ENCODE measurements at regions of chr12 and their contacts with region 1.

Region 1: DNA sequence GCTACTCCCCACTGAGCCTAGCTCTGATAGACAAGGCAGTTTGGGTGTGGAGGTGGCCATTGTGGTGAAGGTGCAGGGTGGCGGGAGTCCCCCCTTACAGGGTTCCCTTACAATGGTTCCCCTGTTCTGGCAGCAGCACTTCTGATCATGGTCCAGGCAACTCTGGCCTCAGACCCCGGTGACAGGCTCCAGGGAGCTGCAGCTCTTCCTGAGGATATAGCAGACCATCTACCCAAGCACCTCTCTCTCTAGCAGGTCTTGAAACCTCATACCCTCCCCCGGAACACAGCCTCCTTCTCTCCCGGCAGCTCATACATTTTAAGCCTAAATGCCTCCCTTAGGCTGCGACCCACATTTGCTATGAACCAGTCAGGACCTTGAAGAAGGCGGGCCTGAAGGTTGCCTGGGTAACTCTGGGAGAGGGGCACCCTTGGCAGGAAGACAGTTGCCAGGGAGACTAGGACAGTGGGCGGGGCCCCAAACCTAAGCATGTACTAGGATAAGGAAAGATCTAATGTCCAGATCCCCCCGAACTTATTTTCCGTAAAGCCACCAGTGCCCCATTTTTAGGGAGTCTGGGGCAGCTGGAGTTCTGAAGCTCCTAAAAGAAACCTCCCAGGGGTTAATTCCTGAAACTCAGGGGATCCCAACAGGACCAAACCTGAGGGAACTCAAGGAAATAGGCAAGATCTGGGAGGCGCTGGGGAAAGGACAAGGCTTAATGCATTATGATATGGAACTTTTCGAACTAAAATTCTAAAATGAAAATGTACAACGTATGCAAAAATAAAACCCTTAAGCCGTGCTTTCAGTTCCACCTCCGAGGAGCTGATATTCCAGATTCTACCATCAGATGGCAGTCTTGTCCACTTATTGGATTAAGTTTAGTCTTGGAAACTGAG is 4.5 kb upstream of the GDF11 start:
- DNase-seq: peak; percentile 51 to 91 (median 74)
- ATAC-seq: peak; percentile 73
- H3K4me3 ChIP-seq: peak overlapping the region; percentile 75
- H3K4me3 Mint-ChIP-seq: peak overlapping the region; percentile 93
- H3K27ac ChIP-seq: peak overlapping the region; percentile 79 to 83
- H3K27ac Mint-ChIP-seq: peak overlapping the region; percentile 89
- H3K4me1 ChIP-seq: peaks cover 33% of the 10 kb centered on the region
- H3K4me1 Mint-ChIP-seq: peaks cover 40% of the 10 kb centered on the region
- H3K27me3 ChIP-seq: no peaks in the 10 kb centered on the region
- H3K27me3 Mint-ChIP-seq: no peaks in the 10 kb centered on the region
- CTCF ChIP-seq: peak; percentile 88

Region 2: GRCh38 chr12:55797068-55797467 is 58.7 kb after region 1 on chr12:
- CTCF ChIA-PET with region 1: interaction called, 12 read pairs
- POLR2A ChIA-PET with region 1: interaction called, 3 read pairs
- intact Hi-C with region 1: loop called (anchors 1 to 2 kb)
- DNase-seq: peak in 4 of 14 experiments; percentile 22 to 52 (median 38)
- ATAC-seq: no peak
- H3K4me3 ChIP-seq: no peak overlapping the region
- H3K4me3 Mint-ChIP-seq: no peak overlapping the region
- H3K27ac ChIP-seq: no peak overlapping the region
- H3K27ac Mint-ChIP-seq: no peak overlapping the region
- H3K4me1 ChIP-seq: no peaks in the 10 kb centered on the region
- H3K4me1 Mint-ChIP-seq: no peaks in the 10 kb centered on the region
- H3K27me3 ChIP-seq: no peaks in the 10 kb centered on the region
- H3K27me3 Mint-ChIP-seq: no peaks in the 10 kb centered on the region
- CTCF ChIP-seq: peak; percentile 48

Region 3: DNA sequence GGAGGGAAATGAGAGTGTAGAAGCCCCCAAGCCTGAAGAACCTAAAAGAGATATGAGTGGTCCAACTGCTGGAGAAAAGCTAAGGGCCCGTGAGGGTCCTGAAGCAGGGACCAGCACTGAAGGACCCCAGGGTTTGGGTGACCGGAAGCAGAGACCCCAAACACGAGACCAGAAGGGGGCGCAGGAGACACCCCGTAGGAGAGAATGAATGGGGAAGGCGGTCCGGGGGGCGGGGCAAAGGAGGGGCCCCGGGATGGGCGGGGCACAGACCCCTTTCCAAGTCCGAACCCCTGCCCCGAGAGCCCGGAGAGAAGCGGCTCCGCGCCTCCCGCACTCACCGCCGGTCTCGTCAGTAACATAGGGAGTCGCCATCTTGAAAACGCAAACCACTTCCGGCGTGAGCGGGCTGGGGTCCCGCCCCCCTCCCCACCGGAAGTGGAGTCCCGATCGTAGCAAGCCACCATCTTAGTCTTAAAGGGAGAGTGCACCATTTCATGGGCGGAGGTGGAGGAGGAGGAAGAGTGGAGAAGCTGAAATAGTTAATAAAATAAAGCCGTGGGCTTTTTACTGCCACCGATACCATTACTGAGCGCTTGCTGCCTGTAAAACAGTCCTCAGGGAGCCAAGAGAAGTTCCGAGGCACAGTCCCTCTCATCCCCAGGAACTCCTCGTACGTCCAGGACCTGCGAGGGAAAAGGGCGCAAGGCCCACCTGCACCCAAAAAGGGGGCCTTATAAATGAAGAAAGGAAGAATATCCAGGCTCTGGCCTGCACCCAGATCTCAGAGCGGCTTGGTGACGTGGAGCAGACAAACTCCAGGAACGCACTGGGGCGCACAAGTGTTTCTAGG is 188.6 kb after region 1 on chr12:
- CTCF ChIA-PET with region 1: interaction called, 31 read pairs
- POLR2A ChIA-PET with region 1: interaction called, 18 read pairs
- intact Hi-C with region 1: loop called in 1 of 2 experiments (anchors 2 kb)
- DNase-seq: peak; percentile 83 to 96 (median 88)
- ATAC-seq: peak; percentile 32
- H3K4me3 ChIP-seq: peak overlapping the region; percentile 98
- H3K4me3 Mint-ChIP-seq: peak overlapping the region; percentile 96
- H3K27ac ChIP-seq: peak overlapping the region; percentile 72 to 93
- H3K27ac Mint-ChIP-seq: peak overlapping the region; percentile 97
- H3K4me1 ChIP-seq: peaks cover 45% of the 10 kb centered on the region
- H3K4me1 Mint-ChIP-seq: peaks cover 56% of the 10 kb centered on the region
- H3K27me3 ChIP-seq: no peaks in the 10 kb centered on the region
- H3K27me3 Mint-ChIP-seq: no peaks in the 10 kb centered on the region
- CTCF ChIP-seq: peak; percentile 86

Region 4: DNA sequence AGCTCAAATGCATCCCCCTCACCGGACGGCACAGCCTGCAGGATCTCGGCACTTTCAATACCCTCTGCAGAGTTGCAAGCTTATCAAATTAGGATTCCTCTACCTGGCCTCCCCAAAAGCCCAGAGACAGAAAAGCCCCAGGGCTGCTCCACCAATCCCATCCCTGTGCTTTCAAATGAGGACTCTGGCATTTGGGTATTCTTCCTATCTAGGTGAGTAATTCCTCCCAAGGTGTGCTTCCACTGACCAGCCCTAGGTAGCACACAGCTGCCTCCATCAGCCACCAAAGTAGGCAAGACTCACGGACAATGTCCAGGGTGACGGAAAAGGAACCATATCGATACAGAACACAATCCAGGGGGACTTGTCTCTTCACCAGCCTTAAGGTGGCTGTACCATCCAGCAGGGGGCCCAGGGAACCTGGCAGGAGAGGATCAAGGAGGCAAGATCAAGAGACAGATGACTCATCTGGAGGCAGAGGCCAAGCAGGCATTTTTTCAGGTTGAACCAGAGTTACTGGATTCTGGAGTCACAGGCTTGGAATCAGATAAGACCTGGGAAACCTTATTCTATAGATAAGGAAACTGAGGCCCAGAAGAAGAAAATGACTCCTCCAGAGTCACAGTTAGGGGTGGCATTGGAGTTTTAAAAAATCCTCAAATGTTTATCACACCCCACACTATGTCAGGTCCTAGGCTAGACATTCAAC is 217.6 kb after region 1 on chr12:
- CTCF ChIA-PET with region 1: no interaction called
- POLR2A ChIA-PET with region 1: interaction called, 15 read pairs
- intact Hi-C with region 1: loop called in 1 of 2 experiments (anchors 5 kb)
- DNase-seq: peak in 12 of 14 experiments; percentile 24 to 75 (median 50)
- ATAC-seq: peak; percentile 77
- H3K4me3 ChIP-seq: no peak overlapping the region
- H3K4me3 Mint-ChIP-seq: no peak overlapping the region
- H3K27ac ChIP-seq: peak overlapping the region in 1 of 2 donors; percentile 24
- H3K27ac Mint-ChIP-seq: peak overlapping the region; percentile 66
- H3K4me1 ChIP-seq: peaks cover 20% of the 10 kb centered on the region
- H3K4me1 Mint-ChIP-seq: peaks cover 25% of the 10 kb centered on the region
- H3K27me3 ChIP-seq: no peaks in the 10 kb centered on the region
- H3K27me3 Mint-ChIP-seq: no peaks in the 10 kb centered on the region
- CTCF ChIP-seq: peak; percentile 47

Region 5: GRCh38 chr12:56041552-56042429 is 303.4 kb after region 1 on chr12 and contains the start of gene RPS26:
- CTCF ChIA-PET with region 1: interaction called, 6 read pairs
- POLR2A ChIA-PET with region 1: interaction called, 5 read pairs
- intact Hi-C with region 1: loop called (anchors 2 to 5 kb)
- DNase-seq: peak; percentile 81 to 99 (median 89)
- ATAC-seq: peak; percentile 92
- H3K4me3 ChIP-seq: peak within 1 kb of the TSS; percentile 95
- H3K4me3 Mint-ChIP-seq: peak within 1 kb of the TSS; percentile 94
- H3K27ac ChIP-seq: peak within 1 kb of the TSS; percentile 88 to 90
- H3K27ac Mint-ChIP-seq: peak within 1 kb of the TSS; percentile 86
- H3K4me1 ChIP-seq: peaks cover 32% of the 10 kb centered on the region
- H3K4me1 Mint-ChIP-seq: peaks cover 51% of the 10 kb centered on the region
- H3K27me3 ChIP-seq: no peaks in the 10 kb centered on the region
- H3K27me3 Mint-ChIP-seq: no peaks in the 10 kb centered on the region
- CTCF ChIP-seq: peak; percentile 43
- total RNA-seq, gene RPS26: 118 to 126 TPM

Region 6: DNA sequence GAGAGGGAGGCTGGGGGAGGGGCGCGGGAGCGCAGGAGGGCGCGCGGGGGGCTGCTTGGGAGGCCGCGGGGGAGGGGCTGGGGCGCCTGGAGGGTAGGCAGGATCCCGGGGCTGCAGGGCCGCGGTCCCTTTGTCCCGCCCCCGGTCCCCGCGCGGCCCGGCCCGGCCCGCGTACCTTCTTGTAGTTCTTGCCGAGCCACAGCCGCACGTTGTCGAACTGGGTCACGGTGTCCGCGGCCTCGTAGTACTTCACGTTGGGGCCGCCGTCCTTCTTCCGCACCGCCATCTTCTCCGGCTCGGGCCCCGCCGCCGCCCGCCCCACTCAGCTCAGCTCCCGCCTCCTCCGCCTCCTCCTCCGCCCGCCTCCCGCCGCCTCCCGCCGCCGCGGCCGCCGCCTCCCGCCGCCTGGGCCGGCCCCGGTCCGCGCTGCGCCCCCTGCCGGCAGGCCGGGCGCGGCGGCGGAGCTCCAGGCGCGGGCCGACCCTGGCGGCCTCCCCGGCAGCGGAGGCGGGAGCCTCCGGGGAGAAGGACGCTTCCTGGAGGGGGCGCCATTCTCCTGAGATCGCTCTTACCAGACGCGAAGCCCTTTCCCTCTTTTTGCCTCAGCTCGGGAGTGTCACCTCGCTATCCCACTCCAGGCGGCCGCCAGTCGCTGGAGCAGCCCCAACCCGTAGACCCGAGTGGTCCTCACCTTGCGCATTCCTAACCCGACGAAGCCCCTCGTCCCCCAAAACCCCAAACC is 451.0 kb after region 1 on chr12 and contains the start of gene SMARCC2:
- CTCF ChIA-PET with region 1: interaction called, 7 read pairs
- POLR2A ChIA-PET with region 1: interaction called, 7 read pairs
- intact Hi-C with region 1: loop called in 1 of 2 experiments (anchors 5 kb)
- DNase-seq: peak; percentile 71 to 95 (median 80)
- ATAC-seq: peak; percentile 77
- H3K4me3 ChIP-seq: peak within 1 kb of the TSS; percentile 96
- H3K4me3 Mint-ChIP-seq: peak within 1 kb of the TSS; percentile 99
- H3K27ac ChIP-seq: peak within 1 kb of the TSS; percentile 87 to 93
- H3K27ac Mint-ChIP-seq: peak within 1 kb of the TSS; percentile 99
- H3K4me1 ChIP-seq: peaks cover 33% of the 10 kb centered on the region
- H3K4me1 Mint-ChIP-seq: peaks cover 46% of the 10 kb centered on the region
- H3K27me3 ChIP-seq: no peaks in the 10 kb centered on the region
- H3K27me3 Mint-ChIP-seq: peaks cover 5% of the 10 kb centered on the region
- CTCF ChIP-seq: peak; percentile 64
- total RNA-seq, gene SMARCC2: 104 to 109 TPM

Measured in CD4-positive, alpha-beta T cell (primary cell).